ENCODE measurements at regions of chr6 and their contacts with region 1.

Region 1: GRCh38 chr6:22613695-22614094 is 44.3 kb downstream of the HDGFL1 start:
- DNase-seq: no peak

Region 2: DNA sequence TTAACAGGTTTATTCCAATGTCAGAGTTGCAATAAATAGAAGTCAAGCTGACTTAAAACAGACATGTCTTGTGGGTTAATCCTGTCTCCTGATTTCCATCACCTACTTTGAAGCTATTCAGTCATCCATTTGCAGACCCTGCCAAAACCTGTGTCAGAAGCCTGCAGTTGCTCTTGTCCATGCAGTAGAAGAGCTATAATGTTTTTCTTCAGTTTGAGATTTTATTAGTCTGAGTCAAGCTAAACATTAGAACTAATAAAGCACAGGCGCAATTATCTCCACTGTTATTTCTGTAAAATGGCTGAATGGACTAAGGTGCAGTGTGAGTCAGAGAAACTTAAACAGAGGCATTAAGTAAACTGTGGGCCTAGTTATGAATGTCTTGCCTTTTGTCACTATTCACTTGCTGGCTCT is 55.4 kb before region 1 on chr6:
- intact Hi-C with region 1: loop called (anchors 5 kb)
- DNase-seq: no peak

Region 3: DNA sequence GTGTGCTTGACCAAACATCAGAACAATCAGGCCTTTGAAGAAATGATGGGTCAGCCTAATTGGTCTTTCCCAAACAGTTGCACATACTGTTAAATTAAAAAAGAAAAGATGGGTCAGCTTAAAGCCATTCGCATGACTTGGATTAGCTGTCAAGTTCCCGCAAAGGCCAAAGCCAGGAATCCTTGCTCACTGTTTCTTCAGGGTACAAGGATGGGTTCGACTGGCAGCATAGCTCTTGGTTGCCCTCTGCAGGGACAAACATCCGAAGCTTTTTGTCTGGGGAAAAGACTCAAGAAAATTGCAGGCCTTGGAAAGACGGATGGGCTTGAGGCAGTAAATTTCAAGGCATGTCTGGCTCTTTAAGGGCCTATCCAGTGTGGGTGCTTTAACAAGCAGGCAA is 123.6 kb after region 1 on chr6:
- intact Hi-C with region 1: loop called (anchors 10 kb)
- DNase-seq: no peak

Measured in cardiac septum (tissue), 1 donor.